K562 (cell line): ENCODE measurements at regions of chr2 and their contacts with region 1.

Region 1: GRCh38 chr2:135913727-135914365 is 37.6 kb upstream of the MCM6 start:
- DNase-seq: peak; percentile 27 to 66 (median 32)
- ATAC-seq: peak; percentile 76
- H3K4me3 ChIP-seq: no peak overlapping the region
- H3K27ac ChIP-seq: no peak overlapping the region
- H3K4me1 ChIP-seq: no peaks in the 10 kb centered on the region
- H3K27me3 ChIP-seq: no peaks in the 10 kb centered on the region
- CTCF ChIP-seq: peak; percentile 40 to 76 (median 50); a peak in 4 of 6 replicates
- EP300 ChIP-seq: no peak
- POLR2A ChIP-seq: no peak
- RAD21 ChIP-seq: peak; percentile 62 to 70

Region 2: GRCh38 chr2:135890835-135891234 is 23.0 kb before region 1 on chr2:
- CTCF ChIA-PET with region 1: no interaction called
- POLR2A ChIA-PET with region 1: no interaction called
- in situ Hi-C with region 1: no loop called
- intact Hi-C with region 1: no loop called
- DNase-seq: no peak
- ATAC-seq: no peak
- H3K4me3 ChIP-seq: no peak overlapping the region
- H3K27ac ChIP-seq: no peak overlapping the region
- H3K4me1 ChIP-seq: peaks cover 0 to 7% of the 10 kb centered on the region in 2 experiments; a peak in 2 of 5 replicates
- H3K27me3 ChIP-seq: no peaks in the 10 kb centered on the region
- CTCF ChIP-seq: no peak
- EP300 ChIP-seq: no peak
- POLR2A ChIP-seq: no peak
- RAD21 ChIP-seq: no peak

Region 3: DNA sequence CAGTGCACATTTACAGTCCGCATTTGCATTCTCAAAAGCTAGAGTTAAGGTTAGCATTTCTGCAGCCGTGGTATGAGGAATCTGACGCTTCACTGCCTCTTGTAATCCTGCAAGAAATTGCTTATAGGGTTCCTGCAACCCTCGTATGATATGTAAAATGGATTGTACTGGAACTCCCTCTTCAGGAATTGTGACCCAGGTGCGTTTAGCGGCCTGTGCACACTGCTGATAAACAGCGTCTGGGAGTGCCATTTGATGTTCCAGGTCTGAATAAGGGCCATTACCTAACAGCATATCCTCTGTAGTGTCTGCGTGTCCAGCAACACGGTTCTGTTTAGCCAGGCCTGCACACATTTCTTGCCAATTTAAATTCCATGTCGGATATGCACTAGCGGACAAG is 161.6 kb after region 1 on chr2:
- CTCF ChIA-PET with region 1: no interaction called
- POLR2A ChIA-PET with region 1: no interaction called
- in situ Hi-C with region 1: no loop called
- intact Hi-C with region 1: loop called (anchors 10 kb)
- DNase-seq: peak in 1 of 4 experiments; percentile 6
- ATAC-seq: no peak
- H3K4me3 ChIP-seq: no peak overlapping the region
- H3K27ac ChIP-seq: no peak overlapping the region
- H3K4me1 ChIP-seq: no peaks in the 10 kb centered on the region
- H3K27me3 ChIP-seq: peaks cover 3 to 5% of the 10 kb centered on the region in 2 experiments; a peak in 3 of 5 replicates
- CTCF ChIP-seq: peak in 1 of 3 experiments; percentile 5; a peak in 1 of 6 replicates
- EP300 ChIP-seq: no peak
- POLR2A ChIP-seq: no peak
- RAD21 ChIP-seq: no peak; a peak in 1 of 4 replicates

Region 4: GRCh38 chr2:136246086-136246669 is 332.3 kb after region 1 on chr2:
- CTCF ChIA-PET with region 1: no interaction called
- POLR2A ChIA-PET with region 1: no interaction called
- in situ Hi-C with region 1: no loop called
- intact Hi-C with region 1: loop called (anchors 10 kb)
- DNase-seq: no peak
- ATAC-seq: peak; percentile 43; the same call in 1 of the 3 replicates
- H3K4me3 ChIP-seq: no peak overlapping the region
- H3K27ac ChIP-seq: no peak overlapping the region
- H3K4me1 ChIP-seq: peaks cover 0 to 2% of the 10 kb centered on the region in 2 experiments; a peak in 1 of 5 replicates
- H3K27me3 ChIP-seq: peaks cover 2 to 19% of the 10 kb centered on the region in 2 experiments; a peak in 2 of 5 replicates
- CTCF ChIP-seq: no peak
- EP300 ChIP-seq: no peak
- POLR2A ChIP-seq: no peak
- RAD21 ChIP-seq: no peak

Region 5: DNA sequence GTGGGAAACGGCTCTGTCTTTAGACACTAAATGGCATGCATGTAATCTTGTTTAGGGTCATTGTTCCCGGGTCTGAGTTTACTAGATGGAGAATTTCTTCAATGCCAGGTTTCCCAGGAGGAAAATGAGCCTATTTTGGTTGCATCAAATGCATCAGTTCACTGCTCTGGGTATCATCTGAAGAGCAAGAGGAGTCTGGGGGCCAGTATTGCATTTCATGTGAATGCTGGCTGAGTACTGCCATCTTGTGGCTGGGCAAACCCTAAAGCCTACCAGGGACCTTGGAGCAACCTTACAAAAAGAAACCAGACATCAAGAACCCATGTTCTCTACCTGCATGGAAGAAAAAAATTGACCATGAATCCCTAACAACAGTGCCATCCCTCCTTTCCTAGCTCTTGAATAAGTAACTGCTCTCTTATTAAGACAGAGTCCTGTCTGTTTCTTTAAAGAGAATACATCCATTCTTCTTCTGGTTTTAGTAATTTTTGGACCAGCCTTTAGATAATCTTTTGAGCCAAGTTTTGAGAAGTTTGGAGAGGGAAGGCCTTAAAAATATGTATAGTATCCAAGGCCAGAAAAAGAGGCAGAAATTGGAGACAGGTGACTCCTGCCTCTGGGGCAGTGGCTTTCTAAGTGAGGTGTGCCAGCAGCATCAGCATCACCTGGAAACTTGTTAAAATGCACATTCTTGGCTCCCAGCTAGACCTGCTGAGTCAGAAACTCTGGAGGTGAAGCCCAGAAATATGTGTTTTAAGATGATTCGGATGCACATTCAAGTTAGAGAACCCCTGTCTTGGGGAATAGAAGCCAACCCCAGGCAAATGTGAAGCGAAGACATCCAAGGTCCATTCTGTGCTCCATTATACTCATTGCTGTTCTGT is 465.1 kb after region 1 on chr2:
- CTCF ChIA-PET with region 1: interaction called, 36 read pairs
- POLR2A ChIA-PET with region 1: no interaction called
- in situ Hi-C with region 1: loop called (anchors 5 kb)
- intact Hi-C with region 1: loop called (anchors 1 kb)
- DNase-seq: peak; percentile 34 to 50 (median 38)
- ATAC-seq: peak; percentile 92
- H3K4me3 ChIP-seq: no peak overlapping the region
- H3K27ac ChIP-seq: no peak overlapping the region
- H3K4me1 ChIP-seq: no peaks in the 10 kb centered on the region
- H3K27me3 ChIP-seq: peaks cover 0 to 4% of the 10 kb centered on the region in 2 experiments; a peak in 1 of 5 replicates
- CTCF ChIP-seq: peak; percentile 52 to 67 (median 64)
- EP300 ChIP-seq: no peak
- POLR2A ChIP-seq: no peak
- RAD21 ChIP-seq: peak; percentile 73 to 82

Region 6: GRCh38 chr2:136384531-136385303 is 470.9 kb after region 1 on chr2:
- CTCF ChIA-PET with region 1: interaction called, 36 read pairs
- POLR2A ChIA-PET with region 1: interaction called, 5 read pairs
- in situ Hi-C with region 1: loop called (anchors 5 kb)
- intact Hi-C with region 1: no loop called
- DNase-seq: peak; percentile 17 to 24 (median 20)
- ATAC-seq: peak; percentile 91
- H3K4me3 ChIP-seq: no peak overlapping the region
- H3K27ac ChIP-seq: no peak overlapping the region
- H3K4me1 ChIP-seq: no peaks in the 10 kb centered on the region
- H3K27me3 ChIP-seq: no peaks in the 10 kb centered on the region
- CTCF ChIP-seq: peak; percentile 57 to 62 (median 61); a peak in 5 of 6 replicates
- EP300 ChIP-seq: no peak
- POLR2A ChIP-seq: no peak
- RAD21 ChIP-seq: peak; percentile 56 to 72

Region 7: DNA sequence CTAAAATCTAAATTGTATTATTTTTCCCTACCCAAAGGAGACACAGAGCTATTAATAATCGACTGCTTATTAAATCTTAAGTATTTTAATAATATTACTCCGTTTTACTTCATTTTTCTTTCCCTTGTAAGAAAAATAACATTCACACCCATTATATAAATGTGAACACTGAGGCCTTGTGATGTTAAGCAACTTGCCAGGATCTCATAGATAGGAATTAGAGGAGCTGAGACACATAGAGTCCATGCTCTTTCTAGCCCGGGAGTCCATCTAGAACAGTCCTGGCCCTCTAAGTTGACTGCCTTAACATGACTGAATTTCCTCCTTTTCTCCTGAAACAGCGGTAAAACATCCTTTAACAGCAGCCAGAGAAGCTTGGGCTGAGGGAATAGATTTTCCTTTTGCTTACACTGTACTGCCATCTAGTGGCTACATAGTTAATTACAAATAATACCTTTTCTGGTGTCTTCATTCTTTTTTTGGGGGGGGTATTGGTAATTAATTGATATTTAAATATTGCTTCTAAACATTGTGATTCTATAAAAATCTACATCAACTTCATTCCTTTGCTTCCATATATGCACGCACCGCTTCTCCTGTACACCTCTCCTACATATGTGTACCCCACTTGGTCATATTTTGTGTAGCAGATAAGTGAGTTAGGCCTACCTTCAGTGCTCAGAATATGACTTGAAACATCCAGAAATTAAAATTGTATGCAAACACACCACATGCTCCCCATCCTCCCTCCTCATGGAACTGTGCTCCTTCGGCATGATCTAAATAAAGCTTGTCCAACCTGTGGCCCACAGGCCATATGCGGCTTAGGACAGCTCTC is 1924.6 kb after region 1 on chr2:
- CTCF ChIA-PET with region 1: interaction called, 4 read pairs
- POLR2A ChIA-PET with region 1: no interaction called
- in situ Hi-C with region 1: no loop called
- intact Hi-C with region 1: loop called (anchors 5 kb)
- DNase-seq: peak; percentile 42 to 68 (median 62)
- ATAC-seq: peak; percentile 80
- H3K4me3 ChIP-seq: no peak overlapping the region
- H3K27ac ChIP-seq: no peak overlapping the region
- H3K4me1 ChIP-seq: no peaks in the 10 kb centered on the region
- H3K27me3 ChIP-seq: no peaks in the 10 kb centered on the region
- CTCF ChIP-seq: peak; percentile 46 to 68 (median 60); a peak in 5 of 6 replicates
- EP300 ChIP-seq: no peak
- POLR2A ChIP-seq: no peak
- RAD21 ChIP-seq: peak; percentile 85 to 91